Right lobe of liver (tissue), 6 donors: ENCODE measurements at regions of chr2 and their contacts with region 1.

Region 1: GRCh38 chr2:96816128-96816835 is at the start of gene CNNM3:
- DNase-seq: peak; percentile 99
- ATAC-seq: peak; percentile 80 to 92 (median 84)
- H3K4me3 ChIP-seq: peak within 1 kb of the TSS; percentile 76 to 93 (median 91)
- H3K27ac ChIP-seq: peak within 1 kb of the TSS; percentile 88 to 94 (median 93)
- H3K4me1 ChIP-seq: peaks cover 0 to 43% (median 16%) of the 10 kb centered on the region in 4 donors
- H3K27me3 ChIP-seq: no peaks in the 10 kb centered on the region
- CTCF ChIP-seq: peak; percentile 67 to 77 (median 69)
- POLR2A ChIP-seq: peak; percentile 71
- total RNA-seq, gene CNNM3: 11.5 to 37.6 (median 21.6) TPM

Region 2: DNA sequence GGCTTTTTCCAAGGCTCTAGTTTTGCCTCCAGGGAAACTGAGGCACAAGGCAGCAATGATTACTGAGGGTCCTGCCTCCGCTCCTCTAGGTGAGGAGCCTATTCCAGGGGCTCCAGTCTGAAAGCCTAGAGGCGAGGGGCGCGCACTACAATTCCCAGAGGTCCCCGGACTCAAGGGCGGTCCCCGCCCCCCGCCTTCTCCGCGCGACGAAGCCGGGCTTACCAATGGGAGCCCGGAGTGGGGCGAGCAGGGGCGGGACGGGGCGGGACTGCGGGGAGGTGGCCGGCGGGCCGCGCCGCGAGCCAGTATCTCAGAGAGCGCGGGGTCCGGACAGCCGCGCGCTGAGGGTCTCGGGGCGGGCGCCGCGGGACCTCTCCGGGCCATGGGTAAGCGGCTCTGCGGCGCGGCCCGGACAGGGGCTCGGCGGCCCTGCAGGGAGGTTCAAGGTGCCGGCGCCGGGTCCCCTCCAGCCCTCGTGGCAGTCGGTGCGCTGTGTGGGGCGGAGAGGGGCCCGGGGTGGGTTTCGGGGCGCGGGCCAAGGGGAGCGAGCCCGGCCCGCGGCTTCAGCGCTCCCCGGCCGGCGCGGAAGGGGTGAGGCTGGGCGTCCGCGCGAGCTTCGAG is 279.7 kb before region 1 on chr2 and contains the start of gene ARID5A:
- intact Hi-C with region 1: no loop called
- DNase-seq: peak; percentile 95 to 97 (median 95)
- ATAC-seq: peak; percentile 82 to 92 (median 92)
- H3K4me3 ChIP-seq: peak within 1 kb of the TSS; percentile 90 to 98 (median 91)
- H3K27ac ChIP-seq: peak within 1 kb of the TSS; percentile 85 to 98 (median 91)
- H3K4me1 ChIP-seq: peaks cover 0 to 5% (median 0%) of the 10 kb centered on the region in 4 donors
- H3K27me3 ChIP-seq: no peaks in the 10 kb centered on the region
- CTCF ChIP-seq: peak; percentile 34 to 44 (median 38)
- POLR2A ChIP-seq: peak; percentile 95
- total RNA-seq, gene ARID5A: 13.2 to 23.1 (median 16.9) TPM

Region 3: GRCh38 chr2:96868555-96869280 is 52.4 kb after region 1 on chr2:
- intact Hi-C with region 1: loop called (anchors 5 to 10 kb)
- DNase-seq: peak; percentile 90 to 91 (median 90)
- ATAC-seq: peak; percentile 70 to 78 (median 77)
- H3K4me3 ChIP-seq: peak overlapping the region; percentile 80 to 98 (median 97)
- H3K27ac ChIP-seq: peak overlapping the region; percentile 92 to 96 (median 94)
- H3K4me1 ChIP-seq: peaks cover 0 to 42% (median 9%) of the 10 kb centered on the region in 4 donors
- H3K27me3 ChIP-seq: no peaks in the 10 kb centered on the region
- CTCF ChIP-seq: peak; percentile 58 to 72 (median 68)
- POLR2A ChIP-seq: peak; percentile 81